B cell (primary cell): ENCODE measurements at regions of chr6 and their contacts with region 1.

Region 1: DNA sequence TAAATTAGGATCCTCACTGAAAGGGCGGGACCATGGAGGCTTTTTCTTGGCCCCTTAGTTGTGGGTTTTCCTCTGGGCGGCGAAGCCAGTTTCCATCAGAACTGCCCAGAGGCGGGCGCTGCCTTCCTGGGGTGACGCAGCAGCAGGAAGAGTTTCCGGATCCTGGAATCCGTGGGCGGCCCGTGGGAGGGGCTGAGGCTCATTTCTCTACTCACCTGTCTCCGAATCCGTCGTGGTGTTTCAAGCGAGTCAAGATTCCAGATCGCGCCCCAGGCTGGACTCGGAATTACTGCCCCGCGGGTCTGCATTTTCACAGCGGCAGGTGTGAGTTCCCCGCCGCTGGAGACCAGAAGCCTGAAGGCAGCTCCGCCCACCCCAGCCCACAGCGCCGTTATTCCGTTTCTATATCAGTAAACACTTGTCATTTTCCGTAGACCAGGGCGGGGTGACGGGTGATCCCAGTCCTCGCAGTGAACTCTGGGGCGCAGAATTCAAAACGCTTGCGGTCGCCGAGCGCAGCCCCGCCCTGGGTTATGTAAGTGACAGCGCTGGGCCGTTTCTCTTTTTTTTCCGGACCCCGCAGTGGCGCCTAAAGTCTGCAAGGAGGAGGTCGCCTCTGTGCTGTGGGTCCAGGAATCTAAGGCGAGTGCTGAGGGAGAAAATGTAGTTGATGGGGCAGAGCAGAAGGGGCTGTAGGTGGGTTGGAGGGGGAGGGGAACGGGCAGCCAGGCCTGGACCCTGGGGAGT is 27.2 kb upstream of the POU5F1 start:
- DNase-seq: peak; percentile 95
- ATAC-seq: peak; percentile 77
- H3K4me3 ChIP-seq: peak overlapping the region; percentile 70 to 99 (median 90)
- H3K4me3 Mint-ChIP-seq: peak overlapping the region; percentile 82
- H3K27ac ChIP-seq: peak overlapping the region; percentile 97 to 100
- H3K27ac Mint-ChIP-seq: peak overlapping the region; percentile 100
- H3K4me1 ChIP-seq: peaks cover 11 to 47% of the 10 kb centered on the region in 2 donors
- H3K4me1 Mint-ChIP-seq: peaks cover 50% of the 10 kb centered on the region
- H3K27me3 ChIP-seq: no peaks in the 10 kb centered on the region
- H3K27me3 Mint-ChIP-seq: no peaks in the 10 kb centered on the region
- CTCF ChIP-seq: no peak

Region 2: GRCh38 chr6:31143148-31143547 is 54.6 kb before region 1 on chr6:
- CTCF ChIA-PET with region 1: interaction called, 133 read pairs
- POLR2A ChIA-PET with region 1: interaction called, 3 read pairs
- intact Hi-C with region 1: no loop called
- DNase-seq: no peak
- ATAC-seq: no peak
- H3K4me3 ChIP-seq: no peak overlapping the region
- H3K4me3 Mint-ChIP-seq: no peak overlapping the region
- H3K27ac ChIP-seq: no peak overlapping the region
- H3K27ac Mint-ChIP-seq: no peak overlapping the region
- H3K4me1 ChIP-seq: no peaks in the 10 kb centered on the region
- H3K4me1 Mint-ChIP-seq: peaks cover 2% of the 10 kb centered on the region
- H3K27me3 ChIP-seq: no peaks in the 10 kb centered on the region
- H3K27me3 Mint-ChIP-seq: no peaks in the 10 kb centered on the region
- CTCF ChIP-seq: no peak

Region 3: GRCh38 chr6:31180502-31180901 is 17.2 kb before region 1 on chr6:
- CTCF ChIA-PET with region 1: no interaction called
- POLR2A ChIA-PET with region 1: interaction called, 10 read pairs
- intact Hi-C with region 1: no loop called
- DNase-seq: peak; percentile 82
- ATAC-seq: peak; percentile 100
- H3K4me3 ChIP-seq: peak overlapping the region in 4 of 5 experiments; percentile 52 to 61 (median 58)
- H3K4me3 Mint-ChIP-seq: peak overlapping the region; percentile 86
- H3K27ac ChIP-seq: peak overlapping the region in 1 of 2 donors; percentile 62
- H3K27ac Mint-ChIP-seq: peak overlapping the region; percentile 56
- H3K4me1 ChIP-seq: peaks cover 0 to 5% of the 10 kb centered on the region in 2 donors
- H3K4me1 Mint-ChIP-seq: peaks cover 9% of the 10 kb centered on the region
- H3K27me3 ChIP-seq: no peaks in the 10 kb centered on the region
- H3K27me3 Mint-ChIP-seq: no peaks in the 10 kb centered on the region
- CTCF ChIP-seq: no peak

Region 4: DNA sequence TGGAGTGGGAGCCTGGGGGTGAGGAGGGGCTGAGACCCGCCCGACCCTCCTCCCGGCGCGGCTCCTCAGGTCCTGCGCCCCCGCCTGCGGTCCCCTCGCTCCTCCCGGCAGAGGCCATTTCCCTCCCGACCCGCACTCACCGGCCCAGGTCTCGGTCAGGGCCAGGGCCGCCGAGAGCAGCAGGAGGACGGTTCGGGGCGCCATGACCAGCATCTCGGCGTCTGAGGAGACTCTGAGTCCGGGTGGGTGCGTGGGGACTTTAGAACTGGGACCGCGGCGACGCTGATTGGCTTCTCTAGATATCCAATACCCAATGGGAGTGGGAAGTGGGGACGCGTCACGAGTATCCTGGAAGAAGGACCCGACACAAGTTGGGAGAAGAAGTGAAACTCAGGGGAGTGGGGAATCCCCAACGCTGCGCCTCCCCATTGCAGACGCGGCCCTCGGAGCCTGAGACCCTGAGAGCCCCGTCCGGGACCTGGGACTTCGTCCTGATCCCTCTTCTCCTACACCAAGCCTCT is 159.3 kb after region 1 on chr6 and contains the start of gene HLA-B:
- CTCF ChIA-PET with region 1: interaction called, 6 read pairs
- POLR2A ChIA-PET with region 1: interaction called, 9 read pairs
- intact Hi-C with region 1: loop called (anchors 1 kb)
- DNase-seq: peak; percentile 96
- ATAC-seq: peak; percentile 88
- H3K4me3 ChIP-seq: peak within 1 kb of the TSS; percentile 51 to 98 (median 87)
- H3K4me3 Mint-ChIP-seq: peak within 1 kb of the TSS; percentile 99
- H3K27ac ChIP-seq: peak within 1 kb of the TSS; percentile 98 to 100
- H3K27ac Mint-ChIP-seq: peak within 1 kb of the TSS; percentile 100
- H3K4me1 ChIP-seq: peaks cover 43 to 44% of the 10 kb centered on the region in 2 donors
- H3K4me1 Mint-ChIP-seq: peaks cover 55% of the 10 kb centered on the region
- H3K27me3 ChIP-seq: no peaks in the 10 kb centered on the region
- H3K27me3 Mint-ChIP-seq: peaks cover 3% of the 10 kb centered on the region
- CTCF ChIP-seq: no peak
- total RNA-seq, gene HLA-B: 3,910 and 4,028 TPM in 2 replicates

Region 5: GRCh38 chr6:32177788-32178546 is 980.2 kb after region 1 on chr6 and contains the start of gene RNF5:
- CTCF ChIA-PET with region 1: no interaction called
- POLR2A ChIA-PET with region 1: no interaction called
- intact Hi-C with region 1: loop called (anchors 5 kb)
- DNase-seq: peak; percentile 99
- ATAC-seq: peak; percentile 79
- H3K4me3 ChIP-seq: peak within 1 kb of the TSS; percentile 68 to 92 (median 75)
- H3K4me3 Mint-ChIP-seq: peak within 1 kb of the TSS; percentile 97
- H3K27ac ChIP-seq: peak within 1 kb of the TSS; percentile 97 to 98
- H3K27ac Mint-ChIP-seq: peak within 1 kb of the TSS; percentile 99
- H3K4me1 ChIP-seq: peaks cover 34 to 47% of the 10 kb centered on the region in 2 donors
- H3K4me1 Mint-ChIP-seq: peaks cover 68% of the 10 kb centered on the region
- H3K27me3 ChIP-seq: no peaks in the 10 kb centered on the region
- H3K27me3 Mint-ChIP-seq: no peaks in the 10 kb centered on the region
- CTCF ChIP-seq: no peak
- total RNA-seq, gene RNF5: 39.0 and 40.7 TPM in 2 replicates